Heart right ventricle (tissue), 16 donors: ENCODE measurements at regions of chr16 and their contacts with region 1.

Region 1: DNA sequence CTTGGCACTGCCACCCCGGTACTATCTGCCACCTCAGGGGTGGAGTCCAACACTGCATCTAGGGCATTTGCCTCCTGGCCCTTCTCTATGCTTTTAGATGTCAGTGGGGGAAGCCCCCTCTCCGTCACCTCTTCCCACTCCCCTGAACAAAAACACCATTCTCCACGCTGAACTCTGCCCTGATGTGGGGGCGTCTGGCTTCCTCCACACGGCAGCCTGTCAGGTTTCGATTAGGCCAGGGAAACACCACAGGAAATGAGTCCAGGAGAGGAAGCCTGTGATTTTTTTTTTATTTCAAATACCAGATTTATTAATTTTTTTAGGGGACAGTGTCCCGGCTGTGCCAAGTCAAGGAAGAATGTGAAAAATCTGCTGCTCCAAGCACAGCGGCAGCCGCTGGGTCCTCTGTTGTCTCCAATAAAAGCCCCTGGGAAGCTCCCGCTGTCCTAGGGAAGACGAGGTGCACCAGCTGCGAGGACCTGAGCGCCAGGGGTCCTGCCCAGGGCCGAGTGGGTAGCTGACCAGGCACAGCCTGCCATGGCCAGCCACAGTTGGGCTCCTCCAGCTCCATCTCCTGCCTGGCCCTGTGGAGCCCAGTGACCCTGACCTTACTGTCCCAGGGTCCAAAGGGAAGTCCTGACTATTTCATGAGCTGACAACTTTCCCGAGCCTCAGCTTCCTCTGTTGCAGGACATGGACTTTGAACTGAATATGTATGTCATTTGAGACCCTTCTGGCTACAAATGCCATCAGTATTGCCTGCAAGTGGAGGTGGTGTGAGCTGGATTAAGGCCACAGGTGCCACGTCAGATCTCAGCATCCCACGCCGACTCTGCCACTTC is 336.7 kb downstream of the FOXL1 start:
- DNase-seq: no peak
- ATAC-seq: peak in 1 of 8 donors; percentile 57
- H3K4me3 ChIP-seq: no peak overlapping the region
- H3K27ac ChIP-seq: no peak overlapping the region
- H3K4me1 ChIP-seq: peaks cover 0 to 27% (median 5%) of the 10 kb centered on the region in 9 donors
- H3K27me3 ChIP-seq: no peaks in the 10 kb centered on the region
- CTCF ChIP-seq: no peak

Region 2: GRCh38 chr16:86975445-86975844 is 60.3 kb after region 1 on chr16:
- intact Hi-C with region 1: loop called in 1 of 10 experiments (anchors 5 kb)
- DNase-seq: no peak
- ATAC-seq: peak; percentile 30 to 66 (median 47)
- H3K4me3 ChIP-seq: no peak overlapping the region
- H3K27ac ChIP-seq: no peak overlapping the region
- H3K4me1 ChIP-seq: peaks cover 0 to 13% (median 0%) of the 10 kb centered on the region in 9 donors
- H3K27me3 ChIP-seq: no peaks in the 10 kb centered on the region
- CTCF ChIP-seq: no peak

Region 3: DNA sequence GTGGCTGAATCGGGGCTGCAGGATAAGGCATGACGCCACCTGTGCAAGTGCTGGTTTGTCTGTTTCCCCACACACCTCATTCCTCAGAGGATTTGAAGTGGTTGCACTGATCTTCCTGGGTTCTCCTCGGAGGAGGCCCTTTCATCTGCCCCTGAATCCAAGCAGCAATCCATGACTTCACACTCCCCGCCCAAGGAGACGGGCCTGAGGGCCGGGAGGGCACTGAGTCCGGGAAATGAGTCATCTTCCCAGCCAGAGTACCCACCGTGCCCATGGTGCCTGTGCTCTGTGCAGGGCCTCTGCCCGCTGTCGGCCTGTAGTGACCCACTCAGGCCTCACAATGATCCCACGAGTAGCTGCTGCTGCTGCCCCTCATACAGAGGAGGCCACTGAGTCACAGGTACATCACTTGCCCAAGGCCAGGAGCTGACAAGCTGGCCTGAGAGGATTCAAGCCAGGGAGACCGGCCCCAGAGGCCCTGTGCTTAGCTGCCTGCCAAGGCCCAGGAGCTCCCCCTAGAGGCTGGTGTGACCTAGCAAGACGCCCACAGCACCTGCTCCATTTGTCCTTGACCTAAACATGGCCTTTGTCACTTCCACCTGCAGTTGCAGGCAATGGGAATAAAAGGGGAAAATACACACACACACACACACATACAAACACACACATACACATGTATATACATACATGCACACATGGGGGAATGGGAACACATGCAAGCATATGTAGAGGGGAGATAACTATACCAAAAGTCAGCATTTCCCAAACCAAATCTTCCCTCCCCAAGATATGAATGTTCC is 162.1 kb after region 1 on chr16:
- intact Hi-C with region 1: no loop called
- DNase-seq: peak; percentile 29 to 40
- ATAC-seq: no peak
- H3K4me3 ChIP-seq: no peak overlapping the region
- H3K27ac ChIP-seq: no peak overlapping the region
- H3K4me1 ChIP-seq: no peaks in the 10 kb centered on the region
- H3K27me3 ChIP-seq: peaks cover 0 to 22% (median 2%) of the 10 kb centered on the region in 7 donors
- CTCF ChIP-seq: peak in 8 of 9 donors; percentile 19 to 61 (median 52)